Dendritic cell treated with granulocyte-macrophage colony-stimulating factor and Interleukin-4, amounts not matched to agents 40 ng/mL and 50 ng/mL, for 4 days (primary cell): ENCODE measurements at regions of chr19 and their contacts with region 1.

Region 1: GRCh38 chr19:49443366-49444099 is 2.2 kb upstream of the SLC17A7 start:
- H3K4me3 Mint-ChIP-seq: peak overlapping the region; percentile 74
- H3K27ac Mint-ChIP-seq: peak overlapping the region; percentile 60
- H3K4me1 Mint-ChIP-seq: peaks cover 68% of the 10 kb centered on the region
- H3K27me3 Mint-ChIP-seq: peaks cover 40% of the 10 kb centered on the region

Region 2: GRCh38 chr19:49391581-49392399 is 51.7 kb before region 1 on chr19:
- intact Hi-C with region 1: loop called (anchors 1 kb)
- H3K4me3 Mint-ChIP-seq: no peak overlapping the region
- H3K27ac Mint-ChIP-seq: no peak overlapping the region
- H3K4me1 Mint-ChIP-seq: peaks cover 27% of the 10 kb centered on the region
- H3K27me3 Mint-ChIP-seq: peaks cover 37% of the 10 kb centered on the region